WTC11 (cell line): ENCODE measurements at regions of chr3 and their contacts with region 1.

Region 1: DNA sequence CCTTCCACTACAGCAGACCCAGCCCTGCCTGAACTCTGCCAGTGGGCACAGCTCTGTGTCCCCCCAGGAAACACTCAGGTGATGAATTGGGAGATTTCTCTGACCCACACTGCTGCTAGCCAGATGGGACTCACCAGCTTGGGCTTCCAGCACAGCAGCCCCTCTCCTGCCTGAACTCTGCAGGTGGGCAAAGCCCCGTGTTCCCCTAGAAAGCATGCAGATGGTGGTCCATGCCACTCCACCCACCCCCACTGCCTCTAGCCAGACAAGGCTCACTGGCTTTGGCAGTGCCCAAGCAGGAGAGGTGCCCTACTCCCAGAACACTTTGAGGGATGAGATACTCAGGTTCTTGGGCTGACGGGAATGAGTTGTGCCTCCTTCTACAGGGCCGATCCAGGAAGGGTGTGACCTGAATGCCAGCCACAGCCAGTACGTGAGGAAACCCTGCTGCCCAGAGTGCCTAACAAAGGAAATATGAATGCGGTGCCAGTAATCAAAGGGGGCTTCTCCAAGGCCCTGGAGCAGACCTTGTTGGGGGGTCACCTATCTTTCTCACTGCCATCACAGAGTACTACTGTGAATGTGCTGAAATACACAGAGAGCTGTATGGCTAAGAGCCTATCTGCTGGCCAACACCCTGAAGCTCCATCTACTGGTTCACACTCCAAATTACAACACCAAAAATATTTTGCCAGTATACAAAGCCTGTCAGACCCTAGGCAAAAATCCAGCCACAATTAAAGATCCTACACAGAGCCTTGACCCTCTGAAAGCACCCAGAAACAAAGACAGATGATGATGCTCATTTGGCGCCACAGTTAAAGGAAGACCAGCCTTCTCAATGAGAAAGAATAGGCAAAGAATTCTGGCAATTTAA is 61.9 kb downstream of the BTLA start:
- DNase-seq: no peak
- ATAC-seq: peak; percentile 96
- H3K4me3 Mint-ChIP-seq: no peak overlapping the region
- H3K27ac Mint-ChIP-seq: no peak overlapping the region
- H3K4me1 Mint-ChIP-seq: 0 out of 2 replicates have a peak, but pooled peaks cover 5% of the 10 kb centered on the region
- H3K27me3 Mint-ChIP-seq: peaks cover 2% of the 10 kb centered on the region
- CTCF ChIP-seq: 0 out of 2 replicates have a peak, but pooled peaks have one; percentile 52

Region 2: GRCh38 chr3:111851511-111851954 is 585.9 kb before region 1 on chr3:
- CTCF ChIA-PET with region 1: no interaction called
- POLR2A ChIA-PET with region 1: no interaction called
- DNase-seq: no peak
- ATAC-seq: no peak
- H3K4me3 Mint-ChIP-seq: no peak overlapping the region
- H3K27ac Mint-ChIP-seq: no peak overlapping the region
- H3K4me1 Mint-ChIP-seq: peaks cover 40% of the 10 kb centered on the region
- H3K27me3 Mint-ChIP-seq: peaks cover under 1% of the 10 kb centered on the region; the same call in 1 of the 2 replicates
- CTCF ChIP-seq: no peak

Region 3: DNA sequence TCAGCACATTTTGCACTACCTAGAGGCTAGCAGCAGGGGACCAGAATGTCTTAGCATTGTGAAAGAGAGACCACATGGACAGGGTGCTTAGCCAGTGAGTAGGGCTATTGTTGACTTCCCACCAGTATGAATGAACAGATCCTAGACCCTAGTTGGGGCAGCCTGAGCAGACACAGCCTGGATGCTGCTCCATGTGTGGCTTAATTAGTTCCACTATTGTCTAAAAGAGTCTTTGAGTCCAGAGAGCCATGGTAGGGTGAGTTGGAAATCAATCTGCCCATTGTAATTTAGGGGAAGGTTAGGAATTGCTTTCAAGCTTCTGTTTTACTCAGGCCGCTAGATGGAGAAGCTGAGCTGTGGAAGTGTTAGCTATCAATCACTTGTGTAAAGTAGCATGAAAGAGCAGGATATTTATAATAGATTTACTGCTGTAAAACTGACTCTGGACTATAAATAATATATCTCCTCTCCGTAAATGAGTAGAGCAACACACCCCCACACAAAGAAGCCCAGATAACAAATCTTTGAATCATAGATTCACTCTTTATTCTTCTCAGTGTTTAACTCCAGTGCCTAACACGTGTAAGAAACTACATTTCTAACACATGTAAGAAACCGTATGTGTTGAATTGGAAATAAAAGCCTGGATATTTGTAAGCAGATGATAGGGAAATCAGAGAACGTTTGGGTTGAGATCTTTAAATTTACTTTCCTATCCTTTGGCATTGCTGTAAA is 300.3 kb before region 1 on chr3:
- CTCF ChIA-PET with region 1: interaction called, 11 read pairs
- POLR2A ChIA-PET with region 1: no interaction called
- DNase-seq: peak; percentile 36
- ATAC-seq: peak; percentile 94
- H3K4me3 Mint-ChIP-seq: no peak overlapping the region
- H3K27ac Mint-ChIP-seq: peak overlapping the region; percentile 90
- H3K4me1 Mint-ChIP-seq: peaks cover 46% of the 10 kb centered on the region
- H3K27me3 Mint-ChIP-seq: no peaks in the 10 kb centered on the region
- CTCF ChIP-seq: no peak

Region 4: GRCh38 chr3:112514527-112515128 is 77.2 kb after region 1 on chr3:
- CTCF ChIA-PET with region 1: no interaction called
- POLR2A ChIA-PET with region 1: no interaction called
- DNase-seq: no peak
- ATAC-seq: no peak
- H3K4me3 Mint-ChIP-seq: no peak overlapping the region
- H3K27ac Mint-ChIP-seq: no peak overlapping the region
- H3K4me1 Mint-ChIP-seq: peaks cover 11% of the 10 kb centered on the region
- H3K27me3 Mint-ChIP-seq: no peaks in the 10 kb centered on the region
- CTCF ChIP-seq: no peak